ENCODE measurements at regions of chr16 and their contacts with region 1.

Region 1: DNA sequence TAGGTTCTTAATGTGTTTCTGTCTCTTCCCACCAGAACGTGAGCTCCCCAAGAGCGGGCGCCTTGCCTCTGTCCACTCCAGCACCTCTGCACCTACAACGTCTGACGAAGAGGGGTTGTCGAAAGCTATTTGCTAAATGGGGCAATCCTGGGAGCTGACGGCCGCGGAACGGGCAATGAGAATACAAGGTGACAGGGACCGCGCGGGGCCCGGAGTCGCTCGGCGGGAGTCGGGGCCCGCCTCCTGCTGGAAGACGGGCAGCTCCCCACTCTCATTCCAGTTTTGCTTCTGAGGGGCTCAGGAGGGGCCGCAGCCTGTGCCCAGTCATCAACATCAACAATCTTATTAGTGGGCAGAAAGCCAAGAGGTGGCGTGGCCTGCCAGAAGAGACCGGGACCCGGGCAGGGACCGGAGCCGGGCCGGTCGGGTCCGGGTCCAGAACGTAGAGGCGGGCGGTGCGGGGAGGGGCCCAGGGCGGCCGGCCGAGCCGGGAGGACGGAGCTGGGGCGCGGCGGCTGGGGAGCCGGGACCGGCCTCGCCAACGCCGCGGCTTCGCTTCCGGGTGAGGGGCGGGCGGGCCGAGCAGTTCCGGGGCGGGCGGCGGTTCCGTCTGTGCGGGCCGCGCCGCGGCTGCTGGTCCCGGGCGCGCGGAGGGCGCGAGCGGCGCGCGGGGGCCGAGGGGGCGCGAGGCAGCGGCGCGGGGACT is at the start of gene MOSMO:
- DNase-seq: peak; percentile 69 to 80 (median 72)
- ATAC-seq: peak; percentile 90
- H3K4me3 ChIP-seq: peak within 1 kb of the TSS; percentile 60 to 97
- H3K27ac ChIP-seq: peak within 1 kb of the TSS; percentile 12 to 73 (median 70)
- H3K4me1 ChIP-seq: peaks cover 16% of the 10 kb centered on the region
- H3K27me3 ChIP-seq: no peaks in the 10 kb centered on the region
- CTCF ChIP-seq: peak in 1 of 7 experiments; percentile 16
- POLR2A ChIP-seq: peak in 2 of 3 donors; percentile 39 to 44
- total RNA-seq, gene MOSMO: 3.6 to 13.2 TPM

Region 2: GRCh38 chr16:22077700-22078313 is 70.1 kb after region 1 on chr16:
- intact Hi-C with region 1: loop called (anchors 5 kb)
- DNase-seq: peak; percentile 48 to 76 (median 68)
- ATAC-seq: no peak
- H3K4me3 ChIP-seq: no peak overlapping the region
- H3K27ac ChIP-seq: no peak overlapping the region
- H3K4me1 ChIP-seq: no peaks in the 10 kb centered on the region
- H3K27me3 ChIP-seq: no peaks in the 10 kb centered on the region
- CTCF ChIP-seq: peak; percentile 65 to 94 (median 71)
- POLR2A ChIP-seq: no peak

Region 3: DNA sequence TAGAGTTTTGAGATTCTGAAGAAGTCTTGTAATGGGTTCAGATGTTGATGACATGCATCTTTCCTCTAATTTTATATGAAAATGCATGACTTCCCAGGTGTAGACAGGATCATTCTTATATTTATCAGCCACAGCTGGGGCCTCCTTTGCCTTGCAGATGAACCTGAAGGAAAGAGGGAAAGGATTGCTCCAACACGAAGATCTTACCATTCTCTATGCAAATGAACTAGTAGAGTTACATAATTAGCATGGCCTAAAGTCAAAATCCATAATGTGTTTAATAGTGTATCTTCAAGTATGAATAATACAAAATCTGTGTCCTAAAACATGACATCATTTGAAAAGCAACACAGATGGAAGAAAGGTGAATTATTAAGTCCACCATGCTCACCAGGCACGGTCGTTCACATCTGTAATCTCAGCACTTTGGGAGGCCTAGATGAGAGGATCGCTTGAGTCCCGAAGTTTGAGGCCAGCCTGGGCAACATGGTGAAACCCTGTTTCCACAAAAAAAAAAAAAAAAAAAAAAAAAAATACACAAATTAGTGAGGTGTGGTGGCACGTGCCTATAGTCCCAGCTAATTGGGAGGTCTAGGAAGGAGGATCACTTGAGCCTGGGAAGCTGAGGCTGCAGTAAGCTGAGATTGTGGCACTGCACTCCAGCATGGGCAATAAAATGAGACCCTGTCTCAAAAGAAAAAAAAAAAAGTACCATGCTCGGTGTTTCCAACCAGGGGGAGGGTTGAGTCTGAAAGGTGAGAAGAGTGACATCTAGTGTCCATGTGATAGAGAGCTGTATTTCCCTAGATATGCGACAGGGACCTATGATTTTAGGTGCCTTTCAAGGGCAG is 91.0 kb after region 1 on chr16:
- intact Hi-C with region 1: no loop called
- DNase-seq: peak in 1 of 4 donors; percentile 10
- ATAC-seq: no peak
- H3K4me3 ChIP-seq: no peak overlapping the region
- H3K27ac ChIP-seq: no peak overlapping the region
- H3K4me1 ChIP-seq: no peaks in the 10 kb centered on the region
- H3K27me3 ChIP-seq: no peaks in the 10 kb centered on the region
- CTCF ChIP-seq: peak in 6 of 7 experiments; percentile 33 to 68 (median 55)
- POLR2A ChIP-seq: no peak

Region 4: GRCh38 chr16:22240023-22240710 is 232.5 kb after region 1 on chr16:
- intact Hi-C with region 1: no loop called
- DNase-seq: peak in 1 of 4 donors; percentile 27
- ATAC-seq: peak; percentile 36
- H3K4me3 ChIP-seq: no peak overlapping the region
- H3K27ac ChIP-seq: peak overlapping the region in 1 of 4 donors; percentile 62
- H3K4me1 ChIP-seq: no peaks in the 10 kb centered on the region
- H3K27me3 ChIP-seq: no peaks in the 10 kb centered on the region
- CTCF ChIP-seq: no peak
- POLR2A ChIP-seq: no peak

Region 5: DNA sequence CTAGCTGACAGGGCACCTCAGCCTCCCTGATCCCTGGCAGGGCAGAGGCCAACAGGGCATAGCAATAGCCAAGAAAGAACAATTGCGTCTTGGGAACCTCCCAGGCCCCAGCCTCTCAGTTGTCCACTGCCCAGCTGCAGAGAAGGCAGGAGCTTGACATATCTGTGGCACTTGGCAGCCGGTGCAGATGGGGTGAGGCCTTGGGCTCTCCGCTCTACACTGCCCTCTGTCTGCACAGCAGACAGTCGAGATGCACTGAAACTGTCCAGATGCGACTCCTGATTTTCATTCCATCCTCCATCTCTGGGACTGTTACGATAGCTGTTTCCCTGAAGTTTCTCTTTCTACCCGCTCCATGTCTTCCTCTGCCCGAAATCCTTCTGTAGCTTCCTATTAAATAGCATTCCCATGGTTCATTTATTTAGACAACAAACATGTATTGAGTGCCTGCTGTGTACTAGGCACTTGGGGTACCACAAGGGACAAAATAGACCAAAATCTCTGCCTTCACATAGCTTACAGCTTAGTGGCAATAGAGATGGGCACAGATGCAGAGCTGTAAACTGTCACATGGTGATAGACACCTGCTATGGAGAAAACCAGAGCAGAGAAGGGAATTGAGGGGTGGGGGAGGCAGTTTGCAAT is 292.9 kb after region 1 on chr16:
- intact Hi-C with region 1: loop called (anchors 10 kb)
- DNase-seq: peak; percentile 69 to 80 (median 78)
- ATAC-seq: no peak
- H3K4me3 ChIP-seq: no peak overlapping the region
- H3K27ac ChIP-seq: no peak overlapping the region
- H3K4me1 ChIP-seq: peaks cover 34% of the 10 kb centered on the region
- H3K27me3 ChIP-seq: no peaks in the 10 kb centered on the region
- CTCF ChIP-seq: peak; percentile 26 to 60 (median 53)
- POLR2A ChIP-seq: no peak